Activated CD4-positive, alpha-beta memory T cell treated with anti-CD3 and anti-CD28 coated beads for 36 hours (primary cell): ENCODE measurements at regions of chr7 and their contacts with region 1.

Region 1: GRCh38 chr7:104983578-104984539 is 30.1 kb upstream of the KMT2E start:
- DNase-seq: peak; percentile 91
- H3K4me3 Mint-ChIP-seq: peak overlapping the region; percentile 100
- H3K27ac Mint-ChIP-seq: peak overlapping the region; percentile 100
- H3K4me1 Mint-ChIP-seq: peaks cover 74% of the 10 kb centered on the region
- H3K27me3 Mint-ChIP-seq: no peaks in the 10 kb centered on the region

Region 2: DNA sequence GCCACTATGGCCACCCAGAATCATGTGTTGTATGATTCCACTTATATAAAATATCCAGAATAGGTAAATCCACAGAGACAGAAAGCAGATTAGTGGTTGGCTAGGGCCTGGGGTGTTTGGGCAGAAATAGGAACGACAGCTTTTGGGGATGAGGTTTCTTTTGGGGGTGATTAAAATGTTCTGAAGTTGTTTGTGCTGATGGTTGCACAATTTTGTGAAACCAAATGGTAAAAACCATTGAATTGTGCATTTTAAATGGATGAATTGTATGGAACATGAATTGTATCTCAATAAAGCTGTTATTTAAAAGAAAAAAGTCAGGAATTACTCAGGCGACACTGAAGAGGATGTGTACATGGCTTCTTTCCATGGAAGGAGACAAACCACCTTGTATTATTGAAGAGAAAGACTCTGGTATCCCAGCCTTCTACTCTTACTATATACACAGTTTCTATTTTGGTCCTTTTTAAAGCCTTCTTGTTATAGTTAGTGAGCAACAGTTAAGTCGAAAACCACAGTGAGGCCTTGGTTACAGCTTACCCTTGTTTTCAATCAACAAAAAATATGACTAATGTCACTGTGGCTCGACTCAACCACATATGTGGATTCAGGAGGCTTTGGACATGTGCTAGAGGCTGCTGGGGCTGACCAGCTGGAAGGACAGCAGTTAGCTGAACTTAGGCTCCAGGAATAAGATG is 27.0 kb before region 1 on chr7:
- CTCF ChIA-PET with region 1: interaction called, 10 read pairs
- POLR2A ChIA-PET with region 1: interaction called, 6 read pairs
- intact Hi-C with region 1: loop called (anchors 1 kb)
- DNase-seq: peak; percentile 60
- H3K4me3 Mint-ChIP-seq: peak overlapping the region; percentile 33
- H3K27ac Mint-ChIP-seq: peak overlapping the region; percentile 94
- H3K4me1 Mint-ChIP-seq: peaks cover 47% of the 10 kb centered on the region
- H3K27me3 Mint-ChIP-seq: no peaks in the 10 kb centered on the region

Region 3: GRCh38 chr7:105003275-105003674 is 19.4 kb after region 1 on chr7:
- CTCF ChIA-PET with region 1: interaction called, 80 read pairs
- POLR2A ChIA-PET with region 1: interaction called, 202 read pairs
- intact Hi-C with region 1: loop called (anchors 2 kb)
- DNase-seq: peak; percentile 62
- H3K4me3 Mint-ChIP-seq: peak overlapping the region; percentile 48
- H3K27ac Mint-ChIP-seq: peak overlapping the region; percentile 73
- H3K4me1 Mint-ChIP-seq: peaks cover 86% of the 10 kb centered on the region
- H3K27me3 Mint-ChIP-seq: no peaks in the 10 kb centered on the region

Region 4: DNA sequence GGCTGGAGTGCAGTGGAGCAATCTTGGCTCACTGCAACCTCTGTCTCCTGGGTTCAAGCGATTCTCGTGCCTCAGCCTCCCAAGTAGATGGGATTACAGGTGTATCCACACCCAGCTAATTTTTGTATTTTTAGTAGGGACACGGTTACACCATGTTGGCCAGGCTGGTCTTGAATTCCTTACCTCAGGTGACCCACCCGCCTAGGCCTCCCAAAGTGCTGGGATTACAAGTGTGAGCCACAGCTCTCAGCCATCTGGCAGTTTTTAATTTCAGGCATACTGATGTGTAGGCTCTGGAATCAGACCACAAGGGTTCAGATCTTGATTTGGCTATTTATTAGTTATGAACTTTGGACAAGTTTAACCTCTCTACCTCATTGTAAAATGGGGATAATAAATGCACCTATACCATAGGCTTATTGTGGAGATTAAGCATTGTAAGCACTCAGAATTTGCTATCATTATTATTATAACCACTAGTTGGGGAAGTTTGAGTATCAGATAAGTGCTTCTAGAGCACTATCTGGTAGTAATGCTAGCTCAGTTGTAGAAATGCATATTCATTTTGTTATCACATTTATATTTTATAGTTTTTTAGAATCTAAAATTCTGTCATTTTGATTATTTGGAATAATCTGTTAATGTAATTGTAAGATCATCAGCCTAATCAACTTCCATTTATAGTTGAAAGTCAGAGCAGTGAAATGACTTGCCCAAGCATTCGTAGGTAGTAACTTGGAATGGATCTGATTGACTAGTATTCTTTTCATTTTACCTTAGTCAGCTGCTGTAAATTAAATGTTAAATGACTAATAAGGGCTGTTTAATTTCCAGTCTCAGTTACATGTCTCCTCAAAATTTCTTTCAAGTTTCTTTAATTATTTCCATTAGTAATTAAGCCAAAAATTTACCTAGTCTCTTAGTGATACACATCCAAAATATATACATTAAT is 52.6 kb after region 1 on chr7:
- CTCF ChIA-PET with region 1: interaction called, 55 read pairs
- POLR2A ChIA-PET with region 1: interaction called, 3 read pairs
- intact Hi-C with region 1: loop called (anchors 1 kb)
- DNase-seq: no peak
- H3K4me3 Mint-ChIP-seq: no peak overlapping the region
- H3K27ac Mint-ChIP-seq: peak overlapping the region; percentile 54
- H3K4me1 Mint-ChIP-seq: peaks cover 56% of the 10 kb centered on the region
- H3K27me3 Mint-ChIP-seq: no peaks in the 10 kb centered on the region

Region 5: GRCh38 chr7:105055621-105056020 is 71.8 kb after region 1 on chr7:
- CTCF ChIA-PET with region 1: interaction called, 15 read pairs
- POLR2A ChIA-PET with region 1: no interaction called
- intact Hi-C with region 1: no loop called
- DNase-seq: no peak
- H3K4me3 Mint-ChIP-seq: no peak overlapping the region
- H3K27ac Mint-ChIP-seq: peak overlapping the region; percentile 8
- H3K4me1 Mint-ChIP-seq: peaks cover 59% of the 10 kb centered on the region
- H3K27me3 Mint-ChIP-seq: no peaks in the 10 kb centered on the region

Region 6: GRCh38 chr7:105277341-105277740 is 293.5 kb after region 1 on chr7:
- CTCF ChIA-PET with region 1: no interaction called
- POLR2A ChIA-PET with region 1: no interaction called
- intact Hi-C with region 1: no loop called
- DNase-seq: no peak
- H3K4me3 Mint-ChIP-seq: no peak overlapping the region
- H3K27ac Mint-ChIP-seq: no peak overlapping the region
- H3K4me1 Mint-ChIP-seq: peaks cover 33% of the 10 kb centered on the region
- H3K27me3 Mint-ChIP-seq: no peaks in the 10 kb centered on the region

Region 7: DNA sequence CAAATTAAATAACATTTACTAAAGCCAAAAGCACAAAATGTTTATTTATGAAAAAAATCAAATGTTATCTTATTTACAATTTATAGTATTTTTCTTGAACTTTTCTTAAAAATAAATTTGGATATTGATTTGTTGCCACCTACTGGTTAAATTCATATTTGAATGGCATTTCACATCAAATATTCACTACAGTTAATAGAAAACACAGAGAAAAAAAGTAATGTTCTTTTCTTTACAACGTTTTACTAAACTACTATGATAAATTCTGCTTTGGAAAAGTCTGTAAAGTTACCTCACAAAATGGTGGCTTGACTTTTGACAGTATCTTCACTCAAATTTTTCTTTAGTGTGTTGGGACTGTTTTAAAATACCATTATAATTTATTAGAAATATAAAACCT is 352.1 kb after region 1 on chr7:
- CTCF ChIA-PET with region 1: interaction called, 3 read pairs
- POLR2A ChIA-PET with region 1: no interaction called
- intact Hi-C with region 1: loop called (anchors 2 kb)
- DNase-seq: no peak
- H3K4me3 Mint-ChIP-seq: no peak overlapping the region
- H3K27ac Mint-ChIP-seq: no peak overlapping the region
- H3K4me1 Mint-ChIP-seq: peaks cover 19% of the 10 kb centered on the region
- H3K27me3 Mint-ChIP-seq: no peaks in the 10 kb centered on the region

Region 8: DNA sequence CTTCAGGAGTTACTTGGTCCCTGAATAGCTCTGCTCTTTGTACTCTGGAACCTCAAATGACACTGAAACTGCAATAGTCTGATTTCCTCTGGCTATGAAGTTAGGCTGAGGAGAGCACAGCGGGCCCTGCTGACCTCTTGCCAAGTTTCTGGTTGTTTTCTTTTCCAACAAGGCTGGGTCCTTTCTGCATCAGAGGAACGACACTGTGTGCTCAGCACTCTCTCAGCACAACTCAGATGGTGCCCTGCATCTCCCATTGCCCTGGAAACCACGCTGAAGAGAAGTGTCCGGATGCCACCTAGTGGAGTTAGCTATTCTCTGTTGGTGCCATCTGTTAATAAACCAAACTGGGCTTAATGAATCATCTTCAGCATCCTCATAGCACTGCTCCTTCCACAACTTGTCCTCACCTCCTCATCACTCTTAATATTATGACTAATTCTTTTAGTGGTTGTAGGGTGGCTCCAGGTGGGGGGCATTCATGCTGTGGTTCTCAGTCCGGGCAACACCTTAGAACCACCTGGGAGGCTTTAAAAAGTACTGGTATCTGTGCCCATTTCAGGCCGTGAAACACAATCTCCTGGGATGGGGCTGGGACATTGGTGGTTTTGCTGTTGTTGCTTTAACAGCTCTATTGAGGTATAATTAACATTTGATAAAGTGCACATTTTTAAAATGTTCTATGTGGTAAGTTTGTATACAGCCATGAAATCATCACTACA is 605.7 kb after region 1 on chr7:
- CTCF ChIA-PET with region 1: no interaction called
- POLR2A ChIA-PET with region 1: no interaction called
- intact Hi-C with region 1: loop called (anchors 2 kb)
- DNase-seq: peak; percentile 75
- H3K4me3 Mint-ChIP-seq: no peak overlapping the region
- H3K27ac Mint-ChIP-seq: no peak overlapping the region
- H3K4me1 Mint-ChIP-seq: peaks cover 5% of the 10 kb centered on the region
- H3K27me3 Mint-ChIP-seq: no peaks in the 10 kb centered on the region